Astrocyte of the cerebellum (primary cell): ENCODE measurements at regions of chr11 and their contacts with region 1.

Region 1: GRCh38 chr11:45461514-45461913 is 175.4 kb upstream of the SYT13 start:
- DNase-seq: no peak
- H3K4me3 ChIP-seq: no peak overlapping the region
- CTCF ChIP-seq: no peak

Region 2: GRCh38 chr11:45507916-45508315 is 46.4 kb after region 1 on chr11:
- in situ Hi-C with region 1: loop called (anchors 5 kb)
- DNase-seq: no peak
- H3K4me3 ChIP-seq: no peak overlapping the region
- CTCF ChIP-seq: no peak

Region 3: GRCh38 chr11:45580399-45580798 is 118.9 kb after region 1 on chr11:
- in situ Hi-C with region 1: no loop called
- DNase-seq: peak; percentile 20
- H3K4me3 ChIP-seq: no peak overlapping the region
- CTCF ChIP-seq: no peak

Region 4: GRCh38 chr11:45736424-45736823 is 274.9 kb after region 1 on chr11:
- in situ Hi-C with region 1: no loop called
- DNase-seq: no peak
- H3K4me3 ChIP-seq: no peak overlapping the region
- CTCF ChIP-seq: no peak